Activated T-helper 1 cell treated with anti-CD3 and anti-CD28 coated beads, Interleukin-12 subunit alpha, Interleukin-12 subunit beta, Interleukin-2, Interleukin-4 antibody, amounts not matched to agents 30 ng/mL and 10 ng/mL and 1 ng/mL, durations not matched to agents 14 hours and 24 hours and 36 hours (primary cell): ENCODE measurements at regions of chr5 and their contacts with region 1.

Region 1: GRCh38 chr5:131394128-131394527 is 130.3 kb downstream of the CDC42SE2 start:
- DNase-seq: peak; percentile 56
- H3K4me3 Mint-ChIP-seq: peak overlapping the region; percentile 81
- H3K27ac Mint-ChIP-seq: peak overlapping the region; percentile 95
- H3K4me1 Mint-ChIP-seq: peaks cover 84% of the 10 kb centered on the region
- H3K27me3 Mint-ChIP-seq: no peaks in the 10 kb centered on the region

Region 2: GRCh38 chr5:131068893-131069643 is 325.1 kb before region 1 on chr5:
- intact Hi-C with region 1: loop called (anchors 5 kb)
- DNase-seq: peak; percentile 65
- H3K4me3 Mint-ChIP-seq: peak overlapping the region; percentile 67
- H3K27ac Mint-ChIP-seq: peak overlapping the region; percentile 91
- H3K4me1 Mint-ChIP-seq: peaks cover 53% of the 10 kb centered on the region
- H3K27me3 Mint-ChIP-seq: no peaks in the 10 kb centered on the region

Region 3: GRCh38 chr5:131165119-131165727 is 228.9 kb before region 1 on chr5 and contains the start of gene HINT1:
- intact Hi-C with region 1: loop called (anchors 1 kb)
- DNase-seq: peak; percentile 93
- H3K4me3 Mint-ChIP-seq: peak within 1 kb of the TSS; percentile 99
- H3K27ac Mint-ChIP-seq: peak within 1 kb of the TSS; percentile 99
- H3K4me1 Mint-ChIP-seq: peaks cover 55% of the 10 kb centered on the region
- H3K27me3 Mint-ChIP-seq: peaks cover 2% of the 10 kb centered on the region
- total RNA-seq, gene HINT1: 249 and 262 TPM in 2 replicates

Region 4: GRCh38 chr5:131170540-131171275 is 223.4 kb before region 1 on chr5 and contains the start of gene LYRM7:
- intact Hi-C with region 1: loop called (anchors 1 kb)
- DNase-seq: peak; percentile 96
- H3K4me3 Mint-ChIP-seq: peak within 1 kb of the TSS; percentile 99
- H3K27ac Mint-ChIP-seq: peak within 1 kb of the TSS; percentile 98
- H3K4me1 Mint-ChIP-seq: peaks cover 51% of the 10 kb centered on the region
- H3K27me3 Mint-ChIP-seq: no peaks in the 10 kb centered on the region
- total RNA-seq, gene LYRM7: 13.7 and 15.8 TPM in 2 replicates

Region 5: GRCh38 chr5:131263648-131264450 is 130.3 kb before region 1 on chr5 and contains the start of gene CDC42SE2:
- intact Hi-C with region 1: loop called (anchors 1 kb)
- DNase-seq: peak; percentile 84
- H3K4me3 Mint-ChIP-seq: peak within 1 kb of the TSS; percentile 84
- H3K27ac Mint-ChIP-seq: peak within 1 kb of the TSS; percentile 92
- H3K4me1 Mint-ChIP-seq: peaks cover 48% of the 10 kb centered on the region
- H3K27me3 Mint-ChIP-seq: no peaks in the 10 kb centered on the region
- total RNA-seq, gene CDC42SE2: 100.0 and 103 TPM in 2 replicates

Region 6: GRCh38 chr5:131281133-131281867 is 112.8 kb before region 1 on chr5:
- intact Hi-C with region 1: loop called (anchors 1 kb)
- DNase-seq: no peak
- H3K4me3 Mint-ChIP-seq: peak overlapping the region; percentile 86
- H3K27ac Mint-ChIP-seq: peak overlapping the region; percentile 91
- H3K4me1 Mint-ChIP-seq: peaks cover 78% of the 10 kb centered on the region
- H3K27me3 Mint-ChIP-seq: peaks cover 5% of the 10 kb centered on the region

Region 7: GRCh38 chr5:131357739-131358561 is 36.2 kb before region 1 on chr5:
- intact Hi-C with region 1: loop called (anchors 1 kb)
- DNase-seq: peak; percentile 26
- H3K4me3 Mint-ChIP-seq: peak overlapping the region; percentile 37
- H3K27ac Mint-ChIP-seq: peak overlapping the region; percentile 88
- H3K4me1 Mint-ChIP-seq: peaks cover 46% of the 10 kb centered on the region
- H3K27me3 Mint-ChIP-seq: no peaks in the 10 kb centered on the region